ENCODE measurements at regions of chr12 and their contacts with region 1.

Region 1: GRCh38 chr12:66235626-66236281 is 46.7 kb downstream of the IRAK3 start:
- DNase-seq: no peak
- ATAC-seq: 0 out of 3 replicates have a peak, but pooled peaks have one; percentile 13
- H3K4me3 ChIP-seq: no peak overlapping the region; the same call in 1 of the 2 replicates
- H3K27ac ChIP-seq: no peak overlapping the region
- H3K4me1 ChIP-seq: peaks cover 8% of the 10 kb centered on the region; the same call in 1 of the 2 replicates
- H3K27me3 ChIP-seq: no peaks in the 10 kb centered on the region
- CTCF ChIP-seq: 0 out of 6 replicates have a peak, but pooled peaks of 1 of the 3 experiments have one; percentile 9
- EP300 ChIP-seq: no peak
- POLR2A ChIP-seq: no peak
- RAD21 ChIP-seq: no peak

Region 2: DNA sequence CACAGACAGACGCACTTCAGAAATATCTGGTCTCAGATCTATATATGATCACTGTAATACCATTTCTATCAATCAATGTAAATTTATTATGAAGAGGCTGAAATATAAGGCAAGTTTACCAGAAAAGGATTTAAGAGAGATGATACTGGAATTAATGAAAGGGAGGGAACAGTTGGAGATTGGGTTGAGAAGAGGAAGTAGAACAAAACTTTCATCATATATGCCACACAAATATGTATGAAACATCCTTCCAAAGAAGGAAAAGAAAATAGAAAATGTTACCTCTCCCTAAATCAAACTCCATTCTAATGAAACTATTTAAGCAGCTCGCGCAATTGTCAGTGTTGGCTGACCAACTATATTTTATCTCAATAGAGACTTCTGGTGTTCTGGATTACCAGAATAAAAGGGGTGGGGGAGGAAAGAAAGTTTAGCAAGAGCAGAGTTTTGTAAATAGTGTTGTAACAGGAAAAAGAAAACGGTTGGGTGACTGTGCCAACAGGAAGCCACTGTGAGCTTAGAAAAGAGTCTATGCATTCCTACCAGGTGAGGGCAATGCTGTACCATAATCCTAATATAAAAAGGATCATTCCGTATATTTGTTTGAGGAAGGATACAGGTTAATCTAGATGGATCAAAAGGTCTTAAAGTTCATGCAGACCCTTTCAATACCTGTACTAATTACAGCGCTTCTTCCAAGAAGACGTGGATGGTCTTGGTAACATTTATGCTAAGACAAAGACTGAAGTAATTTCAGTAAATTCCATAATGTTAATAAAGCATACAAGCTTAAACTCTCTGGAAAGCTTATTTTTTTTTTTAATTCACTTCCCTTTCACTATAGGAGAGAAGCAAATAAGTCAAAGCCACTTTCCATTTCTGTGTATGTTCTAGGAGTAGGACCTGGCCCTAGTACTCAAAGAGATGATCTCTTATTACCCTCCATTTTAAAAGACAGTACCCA is 90.7 kb before region 1 on chr12:
- CTCF ChIA-PET with region 1: interaction called, 14 read pairs
- POLR2A ChIA-PET with region 1: no interaction called
- RAD21 ChIA-PET with region 1: interaction called, 6 read pairs
- SMC1A ChIA-PET with region 1: interaction called, 4 read pairs
- in situ Hi-C with region 1: no loop called
- intact Hi-C with region 1: loop called (anchors 5 kb)
- DNase-seq: no peak
- ATAC-seq: peak; percentile 64
- H3K4me3 ChIP-seq: no peak overlapping the region
- H3K27ac ChIP-seq: no peak overlapping the region
- H3K4me1 ChIP-seq: no peaks in the 10 kb centered on the region
- H3K27me3 ChIP-seq: no peaks in the 10 kb centered on the region
- CTCF ChIP-seq: peak; percentile 9 to 59 (median 17); a peak in 2 of 6 replicates
- EP300 ChIP-seq: no peak
- POLR2A ChIP-seq: no peak
- RAD21 ChIP-seq: 0 out of 2 replicates have a peak, but pooled peaks have one; percentile 30

Region 3: DNA sequence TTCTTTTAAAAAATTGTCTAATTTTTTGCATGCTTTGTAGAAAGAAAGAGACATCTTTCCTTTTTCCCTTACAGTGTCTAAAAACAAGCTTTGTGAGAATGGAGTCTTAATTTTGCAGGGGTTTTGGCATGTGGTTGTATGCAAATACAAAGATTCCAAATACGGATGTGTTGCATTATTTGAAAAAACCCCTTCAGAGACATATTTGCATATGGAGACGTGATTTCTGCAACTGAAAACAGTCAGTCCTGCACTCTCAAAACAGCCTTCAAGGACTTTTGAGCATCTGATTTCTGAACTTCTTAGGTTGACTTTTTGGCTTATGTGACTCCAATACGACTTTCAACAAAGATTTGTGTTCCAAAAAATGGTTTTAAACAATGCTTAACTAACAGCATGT is 38.9 kb before region 1 on chr12:
- CTCF ChIA-PET with region 1: interaction called, 3 read pairs
- POLR2A ChIA-PET with region 1: interaction called, 8 read pairs
- RAD21 ChIA-PET with region 1: interaction called, 5 read pairs
- SMC1A ChIA-PET with region 1: interaction called, 7 read pairs
- in situ Hi-C with region 1: no loop called
- intact Hi-C with region 1: loop called (anchors 5 kb)
- DNase-seq: peak; percentile 54
- ATAC-seq: peak; percentile 88
- H3K4me3 ChIP-seq: no peak overlapping the region
- H3K27ac ChIP-seq: no peak overlapping the region; the same call in 1 of the 2 replicates
- H3K4me1 ChIP-seq: peaks cover 21% of the 10 kb centered on the region
- H3K27me3 ChIP-seq: no peaks in the 10 kb centered on the region
- CTCF ChIP-seq: no peak
- EP300 ChIP-seq: peak; percentile 39 to 79; a peak in 3 of 4 replicates
- POLR2A ChIP-seq: no peak
- RAD21 ChIP-seq: no peak

Region 4: GRCh38 chr12:66247741-66248140 is 12.0 kb after region 1 on chr12:
- CTCF ChIA-PET with region 1: interaction called, 4 read pairs
- POLR2A ChIA-PET with region 1: interaction called, 10 read pairs
- RAD21 ChIA-PET with region 1: interaction called, 3 read pairs
- SMC1A ChIA-PET with region 1: interaction called, 8 read pairs
- in situ Hi-C with region 1: no loop called
- intact Hi-C with region 1: no loop called
- DNase-seq: no peak
- ATAC-seq: no peak
- H3K4me3 ChIP-seq: no peak overlapping the region
- H3K27ac ChIP-seq: no peak overlapping the region
- H3K4me1 ChIP-seq: no peaks in the 10 kb centered on the region
- H3K27me3 ChIP-seq: no peaks in the 10 kb centered on the region
- CTCF ChIP-seq: no peak
- EP300 ChIP-seq: no peak
- POLR2A ChIP-seq: no peak
- RAD21 ChIP-seq: no peak

Region 5: DNA sequence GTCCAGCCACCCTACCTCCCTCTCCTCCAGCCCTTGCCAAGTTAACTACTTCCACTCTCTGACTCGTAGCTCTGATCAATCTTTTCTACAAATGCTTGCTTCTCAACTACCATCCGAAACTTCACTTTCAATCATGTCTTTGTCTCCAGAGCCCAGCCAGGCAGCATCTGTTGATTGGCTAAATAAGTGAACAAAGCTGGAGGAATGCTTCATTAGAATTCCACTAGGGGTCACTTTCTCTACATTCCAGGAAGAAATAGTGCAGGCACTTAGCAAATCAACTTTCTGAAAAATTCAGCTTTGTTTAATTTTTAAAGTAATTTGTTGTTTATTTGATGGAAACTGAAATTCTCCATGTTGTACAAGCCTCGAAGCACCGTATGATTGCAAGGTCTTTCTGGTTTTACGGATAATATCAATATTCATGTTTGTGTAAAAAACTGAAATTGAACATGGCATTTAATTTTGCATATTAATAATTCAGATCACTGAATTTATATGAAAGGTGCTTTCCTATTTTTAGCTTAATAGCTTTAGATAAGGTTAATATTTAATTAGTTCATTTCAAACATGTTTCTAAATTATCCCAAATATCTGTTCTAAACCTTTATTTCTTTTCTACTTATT is 34.1 kb after region 1 on chr12:
- CTCF ChIA-PET with region 1: interaction called, 4 read pairs
- POLR2A ChIA-PET with region 1: interaction called, 3 read pairs
- RAD21 ChIA-PET with region 1: interaction called, 17 read pairs
- SMC1A ChIA-PET with region 1: interaction called, 13 read pairs
- in situ Hi-C with region 1: no loop called
- intact Hi-C with region 1: no loop called
- DNase-seq: peak; percentile 5
- ATAC-seq: peak; percentile 80
- H3K4me3 ChIP-seq: no peak overlapping the region
- H3K27ac ChIP-seq: no peak overlapping the region
- H3K4me1 ChIP-seq: peaks cover 12% of the 10 kb centered on the region
- H3K27me3 ChIP-seq: no peaks in the 10 kb centered on the region
- CTCF ChIP-seq: peak; percentile 46 to 59 (median 53); a peak in 5 of 6 replicates
- EP300 ChIP-seq: no peak
- POLR2A ChIP-seq: no peak
- RAD21 ChIP-seq: peak; percentile 73

Region 6: GRCh38 chr12:66301944-66302826 is 66.4 kb after region 1 on chr12 and contains the start of gene HELB:
- CTCF ChIA-PET with region 1: interaction called, 3 read pairs
- POLR2A ChIA-PET with region 1: interaction called, 12 read pairs
- RAD21 ChIA-PET with region 1: interaction called, 3 read pairs
- SMC1A ChIA-PET with region 1: interaction called, 3 read pairs
- in situ Hi-C with region 1: no loop called
- intact Hi-C with region 1: loop called (anchors 5 kb)
- DNase-seq: peak; percentile 88
- ATAC-seq: peak; percentile 91
- H3K4me3 ChIP-seq: peak within 1 kb of the TSS; percentile 85
- H3K27ac ChIP-seq: peak within 1 kb of the TSS; percentile 87
- H3K4me1 ChIP-seq: no peaks in the 10 kb centered on the region; the same call in 1 of the 2 replicates
- H3K27me3 ChIP-seq: no peaks in the 10 kb centered on the region
- CTCF ChIP-seq: no peak
- EP300 ChIP-seq: no peak
- POLR2A ChIP-seq: peak; percentile 94
- RAD21 ChIP-seq: no peak
- polyA plus RNA-seq, gene HELB: 0.58 to 1.0 TPM

Region 7: GRCh38 chr12:66503746-66504145 is 268.0 kb after region 1 on chr12:
- CTCF ChIA-PET with region 1: no interaction called
- POLR2A ChIA-PET with region 1: no interaction called
- RAD21 ChIA-PET with region 1: no interaction called
- SMC1A ChIA-PET with region 1: no interaction called
- in situ Hi-C with region 1: no loop called
- intact Hi-C with region 1: no loop called
- DNase-seq: no peak
- ATAC-seq: no peak
- H3K4me3 ChIP-seq: no peak overlapping the region
- H3K27ac ChIP-seq: no peak overlapping the region
- H3K4me1 ChIP-seq: no peaks in the 10 kb centered on the region; the same call in none of the 2 replicates
- H3K27me3 ChIP-seq: no peaks in the 10 kb centered on the region
- CTCF ChIP-seq: no peak
- EP300 ChIP-seq: no peak
- POLR2A ChIP-seq: no peak
- RAD21 ChIP-seq: no peak